ENCODE measurements at regions of chr1 and their contacts with region 1.

Region 1: DNA sequence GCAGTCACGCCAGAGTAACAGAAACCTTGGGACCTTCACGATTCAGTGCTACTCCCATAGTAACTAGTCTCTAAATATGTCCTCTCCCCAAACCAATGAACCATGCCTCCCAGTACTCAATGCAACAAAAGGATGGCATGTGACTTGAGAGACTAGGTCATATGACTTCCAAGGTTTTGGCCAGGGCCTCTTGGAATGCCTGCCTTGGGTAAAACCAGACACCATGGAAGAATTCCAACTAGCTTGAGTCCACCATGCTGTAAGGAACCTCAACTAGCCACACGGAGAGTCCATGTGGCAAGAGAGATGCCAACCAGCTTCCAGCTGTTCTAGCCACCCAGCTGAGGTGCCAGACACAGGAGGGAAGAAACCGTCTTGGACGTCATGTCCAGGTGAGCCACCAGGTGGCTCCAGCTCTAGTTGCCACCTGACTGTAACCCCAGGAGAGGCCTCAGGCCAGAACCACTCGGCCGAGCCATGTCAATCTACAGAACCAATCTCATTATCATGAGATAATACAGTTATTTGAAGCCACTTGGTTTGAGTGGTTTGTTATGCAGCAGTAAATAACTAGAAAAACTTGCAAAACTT is 115.0 kb downstream of the SYF2 start:
- DNase-seq: no peak
- H3K4me3 ChIP-seq: no peak overlapping the region
- H3K27ac ChIP-seq: no peak overlapping the region
- H3K4me1 ChIP-seq: no peaks in the 10 kb centered on the region
- H3K27me3 ChIP-seq: no peaks in the 10 kb centered on the region
- CTCF ChIP-seq: peak in 1 of 2 donors; percentile 11
- POLR2A ChIP-seq: no peak

Region 2: GRCh38 chr1:25039229-25039628 is 78.1 kb before region 1 on chr1:
- CTCF ChIA-PET with region 1: no interaction called
- POLR2A ChIA-PET with region 1: no interaction called
- dilution Hi-C with region 1: no loop called
- intact Hi-C with region 1: no loop called
- DNase-seq: no peak
- H3K4me3 ChIP-seq: no peak overlapping the region
- H3K27ac ChIP-seq: no peak overlapping the region
- H3K4me1 ChIP-seq: no peaks in the 10 kb centered on the region
- H3K27me3 ChIP-seq: no peaks in the 10 kb centered on the region
- CTCF ChIP-seq: no peak
- POLR2A ChIP-seq: no peak

Region 3: DNA sequence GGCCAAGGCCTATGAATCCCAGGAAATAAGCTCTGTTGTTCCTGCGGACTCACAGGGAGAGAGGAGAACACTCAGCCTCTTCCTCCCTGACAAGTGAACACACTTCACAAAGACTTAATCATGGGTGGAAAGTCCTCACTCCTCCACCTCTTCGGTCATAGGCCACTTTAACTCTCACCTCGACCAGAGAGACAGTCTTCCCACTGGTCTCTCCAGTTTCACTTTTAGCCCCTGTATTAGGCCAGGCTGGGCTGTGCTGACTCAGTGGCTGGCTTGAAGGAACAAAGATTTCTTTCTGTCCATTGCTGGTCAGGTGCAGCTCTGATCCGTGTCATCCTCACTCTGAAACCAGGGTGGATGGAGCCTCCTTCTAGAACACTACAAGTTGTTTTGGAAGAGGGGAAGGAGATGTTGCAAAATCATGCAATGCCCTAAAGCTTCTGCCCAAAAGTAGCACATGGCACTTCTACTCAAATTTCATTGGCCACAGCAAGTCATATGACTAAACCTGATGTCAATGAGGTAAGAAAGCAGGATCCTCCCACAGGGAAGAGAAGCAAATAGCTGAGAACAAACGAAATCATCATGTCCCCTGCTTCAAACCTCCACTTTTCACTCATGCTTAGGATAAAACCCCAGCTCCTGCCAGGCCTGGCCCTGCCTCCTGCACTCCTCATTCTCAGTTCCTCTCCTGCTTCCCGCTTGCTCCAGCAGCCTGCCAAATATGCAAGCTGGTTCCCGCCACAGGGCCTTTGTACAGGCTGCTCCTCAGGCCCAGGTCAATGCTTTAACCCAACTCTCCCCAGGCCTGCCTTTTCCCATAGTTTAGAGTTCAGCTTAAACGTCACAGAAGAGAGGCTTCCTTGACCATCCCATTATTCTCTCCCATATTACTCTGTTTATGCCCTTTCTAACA is 36.8 kb before region 1 on chr1:
- CTCF ChIA-PET with region 1: no interaction called
- POLR2A ChIA-PET with region 1: interaction called, 10 read pairs
- dilution Hi-C with region 1: no loop called
- intact Hi-C with region 1: no loop called
- DNase-seq: no peak
- H3K4me3 ChIP-seq: no peak overlapping the region
- H3K27ac ChIP-seq: no peak overlapping the region
- H3K4me1 ChIP-seq: no peaks in the 10 kb centered on the region
- H3K27me3 ChIP-seq: no peaks in the 10 kb centered on the region
- CTCF ChIP-seq: no peak
- POLR2A ChIP-seq: no peak

Region 4: DNA sequence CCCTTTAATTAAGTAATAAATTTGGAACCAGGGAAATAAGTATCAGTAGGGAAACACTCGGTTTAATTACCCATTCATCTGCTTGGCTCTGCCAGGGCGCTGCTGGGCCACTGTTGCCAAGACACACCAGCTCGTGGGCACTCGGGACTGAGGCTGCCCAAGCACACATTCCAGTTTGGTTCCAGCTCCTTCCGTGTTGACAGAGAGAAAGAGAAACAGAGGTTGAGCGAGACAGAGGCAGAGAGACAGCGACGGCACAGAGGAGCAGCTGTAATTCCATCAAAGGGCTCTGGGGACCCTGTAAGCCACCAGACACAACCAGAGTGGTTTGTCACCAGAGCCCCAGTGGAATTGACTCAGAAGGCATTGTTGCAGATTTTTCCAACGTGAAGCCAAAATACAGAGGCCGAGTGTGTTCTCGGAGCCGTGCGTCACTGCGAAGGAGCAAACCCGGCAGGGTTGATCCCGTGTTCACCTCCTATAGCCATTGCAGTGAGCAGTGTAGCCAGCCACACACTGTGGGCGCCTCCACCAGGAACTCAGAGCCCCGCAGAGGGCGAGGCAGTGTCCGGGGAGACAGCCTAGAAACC is 81.4 kb after region 1 on chr1:
- CTCF ChIA-PET with region 1: no interaction called
- POLR2A ChIA-PET with region 1: no interaction called
- dilution Hi-C with region 1: no loop called
- intact Hi-C with region 1: no loop called
- DNase-seq: no peak
- H3K4me3 ChIP-seq: no peak overlapping the region
- H3K27ac ChIP-seq: no peak overlapping the region
- H3K4me1 ChIP-seq: no peaks in the 10 kb centered on the region
- H3K27me3 ChIP-seq: peaks cover 7 to 8% of the 10 kb centered on the region in 2 experiments
- CTCF ChIP-seq: no peak
- POLR2A ChIP-seq: no peak

Region 5: DNA sequence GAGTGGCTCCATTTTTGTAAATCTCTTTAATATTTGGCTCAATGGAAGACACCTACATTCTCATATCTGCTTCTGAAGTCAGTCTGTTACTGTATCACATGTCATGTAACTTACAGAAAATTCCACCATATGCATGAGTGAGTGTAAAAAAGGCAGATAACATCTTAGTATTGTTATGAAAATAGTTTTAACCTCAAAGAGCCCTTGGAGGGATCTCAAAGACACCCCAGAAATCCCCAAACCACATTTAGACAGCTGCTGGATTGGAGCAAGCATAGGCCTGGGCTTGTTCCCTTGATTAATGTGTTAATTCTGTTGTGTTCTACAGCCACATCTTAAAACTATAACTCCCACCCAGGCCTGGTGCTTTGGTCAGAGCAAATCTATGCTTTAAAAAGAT is 330.2 kb after region 1 on chr1:
- CTCF ChIA-PET with region 1: no interaction called
- POLR2A ChIA-PET with region 1: no interaction called
- dilution Hi-C with region 1: no loop called
- intact Hi-C with region 1: no loop called
- DNase-seq: no peak
- H3K4me3 ChIP-seq: no peak overlapping the region
- H3K27ac ChIP-seq: no peak overlapping the region
- H3K4me1 ChIP-seq: no peaks in the 10 kb centered on the region
- H3K27me3 ChIP-seq: no peaks in the 10 kb centered on the region
- CTCF ChIP-seq: no peak
- POLR2A ChIP-seq: no peak